Prostate gland (tissue), 2 donors: ENCODE measurements at regions of chr20 and their contacts with region 1.

Region 1: GRCh38 chr20:1392823-1393506 is at the start of gene FKBP1A:
- DNase-seq: peak; percentile 87
- H3K4me3 ChIP-seq: peak within 1 kb of the TSS; percentile 88 to 96
- H3K27ac ChIP-seq: peak within 1 kb of the TSS; percentile 57 to 80
- H3K4me1 ChIP-seq: peaks cover 17% of the 10 kb centered on the region
- H3K27me3 ChIP-seq: no peaks in the 10 kb centered on the region
- CTCF ChIP-seq: peak in 3 of 4 experiments; percentile 21 to 49 (median 37)
- POLR2A ChIP-seq: peak; percentile 88
- total RNA-seq, gene FKBP1A: 103 to 161 TPM

Region 2: GRCh38 chr20:1325173-1326030 is 67.6 kb before region 1 on chr20:
- intact Hi-C with region 1: loop called (anchors 5 kb)
- DNase-seq: peak; percentile 94
- H3K4me3 ChIP-seq: peak overlapping the region; percentile 71 to 78
- H3K27ac ChIP-seq: peak overlapping the region; percentile 91 to 93
- H3K4me1 ChIP-seq: no peaks in the 10 kb centered on the region
- H3K27me3 ChIP-seq: no peaks in the 10 kb centered on the region
- CTCF ChIP-seq: peak in 2 of 4 experiments; percentile 52 to 62
- POLR2A ChIP-seq: peak; percentile 92